HEK293 (cell line): ENCODE measurements at regions of chr6 and their contacts with region 1.

Region 1: GRCh38 chr6:30541515-30542403 is 14.5 kb downstream of the GNL1 start:
- H3K4me3 ChIP-seq: peak overlapping the region; percentile 34
- H3K27ac ChIP-seq: no peak overlapping the region
- H3K4me1 ChIP-seq: no peaks in the 10 kb centered on the region
- CTCF ChIP-seq: peak; percentile 79

Region 2: GRCh38 chr6:30453508-30454116 is 88.1 kb before region 1 on chr6:
- CTCF ChIA-PET with region 1: interaction called, 19 read pairs
- POLR2A ChIA-PET with region 1: interaction called, 4 read pairs
- H3K4me3 ChIP-seq: no peak overlapping the region
- H3K27ac ChIP-seq: no peak overlapping the region
- H3K4me1 ChIP-seq: no peaks in the 10 kb centered on the region
- CTCF ChIP-seq: peak; percentile 97

Region 3: GRCh38 chr6:30489081-30490025 is 52.4 kb before region 1 on chr6 and contains the start of gene HLA-E:
- CTCF ChIA-PET with region 1: interaction called, 324 read pairs
- POLR2A ChIA-PET with region 1: interaction called, 6 read pairs
- H3K4me3 ChIP-seq: peak within 1 kb of the TSS; percentile 78
- H3K27ac ChIP-seq: peak within 1 kb of the TSS; percentile 80
- H3K4me1 ChIP-seq: no peaks in the 10 kb centered on the region
- CTCF ChIP-seq: no peak

Region 4: DNA sequence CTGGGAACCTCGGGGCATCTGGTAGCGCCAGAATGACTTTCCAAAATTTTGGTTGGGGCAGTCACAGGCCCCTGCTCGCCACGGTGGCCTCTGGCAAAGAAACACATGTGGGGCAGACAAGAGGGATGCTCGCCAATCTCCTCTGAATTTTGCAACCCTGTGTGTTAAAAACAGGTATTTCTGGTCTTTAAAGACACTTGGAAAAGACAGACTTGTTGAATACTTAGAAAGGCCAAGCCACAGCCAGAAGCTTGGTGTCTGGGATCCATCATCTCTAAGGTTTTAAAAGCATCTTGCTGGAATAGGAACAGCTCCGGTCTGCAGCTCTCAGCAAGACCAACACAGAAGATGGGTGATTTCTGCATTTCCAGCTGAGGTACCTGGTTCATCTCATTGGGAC is 21.2 kb before region 1 on chr6:
- CTCF ChIA-PET with region 1: interaction called, 14 read pairs
- POLR2A ChIA-PET with region 1: interaction called, 4 read pairs
- H3K4me3 ChIP-seq: no peak overlapping the region
- H3K27ac ChIP-seq: no peak overlapping the region
- H3K4me1 ChIP-seq: no peaks in the 10 kb centered on the region
- CTCF ChIP-seq: no peak

Region 5: GRCh38 chr6:30571075-30571768 is 29.5 kb after region 1 on chr6 and contains the start of gene ABCF1:
- CTCF ChIA-PET with region 1: interaction called, 29 read pairs
- POLR2A ChIA-PET with region 1: no interaction called
- H3K4me3 ChIP-seq: peak within 1 kb of the TSS; percentile 94
- H3K27ac ChIP-seq: peak within 1 kb of the TSS; percentile 64
- H3K4me1 ChIP-seq: peaks cover 9% of the 10 kb centered on the region; the same call in 1 of the 2 replicates
- CTCF ChIP-seq: no peak

Region 6: DNA sequence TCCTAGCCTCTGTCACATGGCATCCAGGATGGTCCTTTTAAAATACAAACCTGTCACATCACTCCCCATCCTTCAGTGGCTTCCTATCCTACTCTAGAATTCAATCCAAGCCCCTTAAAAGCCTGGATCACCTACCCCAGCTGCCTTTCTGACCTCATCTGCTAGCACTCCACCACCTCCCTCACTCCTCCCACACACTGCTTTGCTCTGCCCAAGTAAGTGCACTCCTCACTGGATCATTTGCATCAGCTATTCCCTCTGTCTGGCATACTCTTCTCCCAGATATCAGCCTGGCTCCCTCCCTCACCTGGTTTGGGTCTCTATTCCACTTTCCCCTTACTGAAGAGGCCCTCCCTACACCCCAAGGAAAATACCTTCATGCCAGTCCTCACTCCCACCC is 115.7 kb after region 1 on chr6:
- CTCF ChIA-PET with region 1: no interaction called
- POLR2A ChIA-PET with region 1: no interaction called
- H3K4me3 ChIP-seq: no peak overlapping the region
- H3K27ac ChIP-seq: no peak overlapping the region
- H3K4me1 ChIP-seq: no peaks in the 10 kb centered on the region
- CTCF ChIP-seq: no peak

Region 7: DNA sequence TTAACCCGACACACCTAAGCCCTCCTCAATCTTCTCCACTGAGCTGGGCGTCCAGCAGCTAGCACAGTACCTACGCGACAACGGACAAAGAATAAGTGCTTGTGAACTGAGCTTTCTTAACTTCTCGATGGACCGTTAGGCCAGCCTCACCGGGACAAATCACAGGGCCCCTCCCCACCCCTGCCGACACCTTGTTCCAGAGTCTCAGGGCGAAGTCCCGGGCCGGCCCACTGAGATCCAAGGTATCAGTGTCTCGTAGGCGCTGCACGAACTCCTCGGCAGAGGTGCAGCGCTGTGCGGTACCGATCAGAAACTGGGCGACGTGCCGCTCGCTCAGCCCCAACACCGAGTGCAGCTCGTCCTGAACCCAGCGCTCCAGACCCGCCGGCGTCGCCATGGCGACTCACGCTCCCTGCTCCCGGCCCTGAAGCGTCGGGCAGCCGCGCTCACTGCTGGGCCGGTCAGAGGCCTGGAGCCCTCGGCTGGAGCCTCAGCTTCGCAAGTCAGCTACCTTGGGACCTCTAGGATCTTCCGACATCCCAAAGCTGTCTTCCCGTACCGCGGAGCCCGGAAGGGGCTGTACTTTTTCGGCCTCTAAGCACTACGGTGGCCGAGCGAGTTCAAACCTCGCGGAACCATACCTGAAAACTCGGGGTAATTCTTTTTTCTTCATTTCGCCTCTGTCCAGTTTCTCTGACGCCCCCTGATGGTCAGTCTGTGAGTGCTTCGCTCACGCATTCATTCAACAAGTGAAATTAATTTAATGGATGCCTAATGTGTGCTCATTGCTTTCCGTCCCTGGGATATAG is 130.9 kb after region 1 on chr6 and contains the start of gene DHX16:
- CTCF ChIA-PET with region 1: interaction called, 12 read pairs
- POLR2A ChIA-PET with region 1: interaction called, 9 read pairs
- H3K4me3 ChIP-seq: peak within 1 kb of the TSS; percentile 60
- H3K27ac ChIP-seq: peak within 1 kb of the TSS; percentile 54; the same call in 1 of the 2 replicates
- H3K4me1 ChIP-seq: 0 out of 2 replicates have a peak, but pooled peaks cover 3% of the 10 kb centered on the region
- CTCF ChIP-seq: peak; percentile 81; the same call in 1 of the 2 replicates

Region 8: DNA sequence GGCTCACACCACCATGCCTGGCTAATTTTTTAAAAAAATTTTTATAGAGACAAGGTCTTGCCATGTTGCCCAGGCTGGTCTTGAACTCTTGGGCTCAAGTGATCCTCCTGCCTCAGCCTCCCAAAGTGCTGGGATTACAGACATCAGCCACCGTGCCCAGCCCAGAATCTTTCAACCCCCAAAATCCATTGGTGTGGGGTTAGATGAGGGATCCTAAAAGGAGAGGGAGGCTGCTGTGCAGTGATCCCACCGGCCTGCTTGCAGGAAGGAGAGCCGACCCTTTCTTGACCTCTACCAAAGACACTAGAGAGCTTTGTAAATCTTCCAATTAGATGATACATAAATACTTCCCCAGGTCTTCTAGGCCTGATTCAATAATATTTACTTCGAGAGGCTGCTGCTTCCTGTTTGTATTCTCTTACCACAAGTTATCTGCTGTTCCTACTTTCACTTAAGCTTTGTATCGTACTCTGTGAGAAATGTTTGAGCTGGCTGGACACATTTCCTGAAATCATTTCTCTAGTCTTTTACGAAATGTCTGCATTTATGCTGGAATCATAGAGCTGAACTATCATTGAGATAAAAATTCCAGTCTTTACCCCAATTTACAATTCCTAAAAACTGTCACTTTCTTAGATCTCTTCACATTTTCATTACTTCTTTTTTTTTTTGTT is 251.9 kb after region 1 on chr6:
- CTCF ChIA-PET with region 1: no interaction called
- POLR2A ChIA-PET with region 1: no interaction called
- H3K4me3 ChIP-seq: no peak overlapping the region
- H3K27ac ChIP-seq: no peak overlapping the region
- H3K4me1 ChIP-seq: no peaks in the 10 kb centered on the region
- CTCF ChIP-seq: no peak